ENCODE measurements at regions of chr2 and their contacts with region 1.

Region 1: GRCh38 chr2:134119713-134120164 is 134.1 kb upstream of the MGAT5 start:
- DNase-seq: peak; percentile 83 to 88
- H3K4me3 ChIP-seq: peak overlapping the region; percentile 87 to 92 (median 92)
- H3K27ac ChIP-seq: peak overlapping the region; percentile 90 to 94
- H3K4me1 ChIP-seq: no peaks in the 10 kb centered on the region
- H3K27me3 ChIP-seq: no peaks in the 10 kb centered on the region
- CTCF ChIP-seq: no peak
- POLR2A ChIP-seq: no peak

Region 2: DNA sequence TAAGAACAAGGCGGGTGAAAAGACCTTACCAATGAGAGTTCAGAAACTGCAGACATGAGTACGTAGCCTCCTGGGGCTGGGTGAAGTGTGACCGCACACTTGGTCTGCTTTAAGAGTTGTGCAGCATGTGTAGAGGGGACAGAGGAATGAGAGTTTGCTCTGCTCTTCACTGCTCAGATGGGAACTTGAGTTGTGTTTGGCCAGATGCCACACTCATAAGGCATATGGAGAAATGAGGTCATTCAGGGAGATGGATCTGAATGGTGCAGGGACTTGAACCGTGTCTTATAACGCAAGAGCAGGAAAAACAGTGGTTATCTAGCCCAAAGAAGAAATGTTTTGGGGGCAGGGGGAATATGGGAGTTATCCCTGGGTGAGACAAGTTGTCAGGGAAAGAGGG is 1175.9 kb before region 1 on chr2:
- intact Hi-C with region 1: no loop called
- DNase-seq: no peak
- H3K4me3 ChIP-seq: no peak overlapping the region
- H3K27ac ChIP-seq: no peak overlapping the region
- H3K4me1 ChIP-seq: no peaks in the 10 kb centered on the region
- H3K27me3 ChIP-seq: no peaks in the 10 kb centered on the region
- CTCF ChIP-seq: no peak
- POLR2A ChIP-seq: no peak

Region 3: GRCh38 chr2:133235968-133236367 is 883.8 kb before region 1 on chr2:
- intact Hi-C with region 1: no loop called
- DNase-seq: no peak
- H3K4me3 ChIP-seq: no peak overlapping the region
- H3K27ac ChIP-seq: no peak overlapping the region
- H3K4me1 ChIP-seq: no peaks in the 10 kb centered on the region
- H3K27me3 ChIP-seq: no peaks in the 10 kb centered on the region
- CTCF ChIP-seq: no peak
- POLR2A ChIP-seq: no peak

Region 4: GRCh38 chr2:133886735-133887660 is 232.7 kb before region 1 on chr2:
- intact Hi-C with region 1: loop called (anchors 10 kb)
- DNase-seq: peak; percentile 75 to 81
- H3K4me3 ChIP-seq: peak overlapping the region in 1 of 3 donors; percentile 12
- H3K27ac ChIP-seq: peak overlapping the region in 1 of 2 donors; percentile 26
- H3K4me1 ChIP-seq: peaks cover 6 to 7% of the 10 kb centered on the region in 2 donors
- H3K27me3 ChIP-seq: no peaks in the 10 kb centered on the region
- CTCF ChIP-seq: peak; percentile 31 to 69 (median 68)
- POLR2A ChIP-seq: no peak

Region 5: GRCh38 chr2:134245340-134245984 is 125.7 kb after region 1 on chr2:
- intact Hi-C with region 1: loop called (anchors 5 kb)
- DNase-seq: peak; percentile 69 to 73
- H3K4me3 ChIP-seq: no peak overlapping the region
- H3K27ac ChIP-seq: no peak overlapping the region
- H3K4me1 ChIP-seq: no peaks in the 10 kb centered on the region
- H3K27me3 ChIP-seq: no peaks in the 10 kb centered on the region
- CTCF ChIP-seq: peak; percentile 24 to 75 (median 71)
- POLR2A ChIP-seq: no peak

Region 6: DNA sequence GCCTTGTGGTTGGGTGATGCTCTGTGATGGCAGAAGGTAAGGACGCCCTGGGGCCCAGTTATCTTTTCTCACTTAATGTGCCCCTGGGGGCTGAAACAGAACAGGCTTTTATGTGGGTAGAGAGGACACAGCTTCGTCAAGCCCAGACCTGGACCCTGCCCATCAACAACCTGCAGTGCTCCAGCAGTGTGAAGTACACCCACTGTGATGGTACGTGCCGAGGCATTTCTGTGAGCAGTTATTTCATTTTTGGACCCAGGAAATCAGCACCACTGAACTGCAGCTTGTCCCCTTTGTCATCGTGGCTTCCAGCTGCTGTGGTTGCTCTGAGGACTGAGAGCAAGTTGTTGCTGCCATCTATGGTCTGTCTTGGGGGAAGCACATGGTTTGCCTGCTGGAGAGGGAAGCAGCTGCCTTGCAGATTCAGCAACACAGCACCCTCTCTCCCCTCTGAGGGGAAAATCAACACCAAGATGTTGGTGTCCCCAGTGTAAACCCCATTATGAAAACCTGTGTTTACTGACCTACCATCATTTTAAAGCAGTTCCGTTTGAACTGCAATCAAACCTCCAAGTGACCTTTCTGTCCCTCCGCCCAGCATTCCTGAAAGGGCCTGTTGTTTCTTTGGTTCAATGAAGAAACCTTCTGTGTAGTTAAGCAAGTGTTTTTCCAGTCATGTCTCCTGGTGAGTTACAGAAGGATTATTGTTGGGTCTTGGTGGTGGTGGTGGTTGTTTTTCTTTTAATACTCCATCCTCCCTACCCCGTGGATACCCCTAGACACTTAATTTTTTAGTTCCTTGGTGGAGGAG is 292.3 kb after region 1 on chr2:
- intact Hi-C with region 1: loop called (anchors 10 kb)
- DNase-seq: peak in 1 of 2 donors; percentile 61
- H3K4me3 ChIP-seq: no peak overlapping the region
- H3K27ac ChIP-seq: peak overlapping the region; percentile 68 to 80
- H3K4me1 ChIP-seq: peaks cover 0 to 15% of the 10 kb centered on the region in 2 donors
- H3K27me3 ChIP-seq: no peaks in the 10 kb centered on the region
- CTCF ChIP-seq: peak in 2 of 3 donors; percentile 64 to 66
- POLR2A ChIP-seq: no peak

Measured in breast epithelium (tissue), 4 donors.